Spleen (tissue), 13 donors: ENCODE measurements at regions of chr2 and their contacts with region 1.

Region 1: DNA sequence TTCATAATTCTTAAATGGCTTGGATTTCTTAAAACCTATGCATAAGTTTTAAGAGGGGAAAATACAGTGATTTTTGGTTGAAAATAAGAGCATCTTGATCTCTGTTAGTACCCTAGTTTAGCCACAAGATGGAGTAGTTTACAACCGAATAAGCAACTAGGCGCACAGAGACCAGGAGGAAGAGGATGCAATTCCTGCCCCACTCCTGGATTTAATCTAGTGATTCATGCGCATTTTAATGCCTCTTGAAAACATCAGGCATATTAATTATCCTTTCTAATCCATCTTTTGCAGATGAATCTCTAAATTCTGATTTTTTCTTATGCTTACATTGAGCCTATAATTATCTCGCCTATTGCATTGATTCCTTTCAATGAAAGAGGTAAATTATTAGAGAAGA is 76.7 kb downstream of the MRPS9 start:
- DNase-seq: no peak
- H3K4me3 ChIP-seq: no peak overlapping the region
- H3K27ac ChIP-seq: no peak overlapping the region
- H3K4me1 ChIP-seq: peaks cover 0 to 7% (median 0%) of the 10 kb centered on the region in 6 donors
- H3K27me3 ChIP-seq: peaks cover 0 to 4% (median 0%) of the 10 kb centered on the region in 7 donors
- CTCF ChIP-seq: peak; percentile 23 to 75 (median 67)
- POLR2A ChIP-seq: no peak

Region 2: DNA sequence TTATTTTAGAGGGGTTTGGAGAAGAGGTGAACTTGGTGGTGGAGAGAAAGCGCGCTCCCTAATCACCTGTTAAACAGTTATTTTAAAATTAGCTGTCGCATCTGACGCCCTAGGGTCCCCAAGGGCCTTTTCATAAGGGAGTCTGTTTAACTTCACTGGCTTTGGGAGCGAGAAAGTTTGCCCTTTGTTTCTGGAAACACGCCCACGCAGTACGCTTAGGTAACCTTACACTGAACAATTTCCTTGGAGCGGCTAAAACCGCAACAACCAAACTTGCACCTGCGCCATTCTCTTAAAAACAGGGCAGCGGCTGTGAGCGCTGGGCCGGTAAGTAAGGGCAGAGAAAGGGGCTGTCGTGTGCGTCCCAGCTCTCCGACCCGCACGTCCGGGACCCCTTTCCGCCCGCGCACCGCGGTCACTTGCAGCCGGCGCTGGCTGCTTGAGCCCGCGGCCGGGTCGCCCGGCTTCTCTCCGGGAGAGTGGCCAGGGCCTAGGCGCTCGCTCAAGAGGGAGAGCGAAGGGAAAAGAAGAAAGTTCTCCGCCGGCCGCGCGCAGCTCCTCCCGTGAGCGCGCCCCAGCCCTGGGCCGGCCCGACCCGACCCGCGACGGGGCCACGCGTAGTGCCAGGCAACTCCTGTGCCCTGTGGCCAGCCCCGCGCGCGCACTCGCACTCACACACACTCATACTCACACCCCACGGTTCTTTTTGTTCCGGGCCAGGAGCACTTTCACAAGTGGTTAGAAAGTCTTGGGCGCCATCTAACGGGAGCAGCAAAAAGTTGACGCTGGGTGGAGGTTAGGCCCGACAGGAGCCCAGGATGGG is 241.5 kb before region 1 on chr2:
- intact Hi-C with region 1: no loop called
- DNase-seq: peak; percentile 76
- H3K4me3 ChIP-seq: peak overlapping the region; percentile 40 to 80 (median 52)
- H3K27ac ChIP-seq: no peak overlapping the region
- H3K4me1 ChIP-seq: peaks cover 8 to 27% (median 21%) of the 10 kb centered on the region in 6 donors
- H3K27me3 ChIP-seq: peaks cover 0 to 92% (median 54%) of the 10 kb centered on the region in 7 donors
- CTCF ChIP-seq: peak in 7 of 11 experiments; percentile 27 to 55 (median 35)
- POLR2A ChIP-seq: no peak

Region 3: DNA sequence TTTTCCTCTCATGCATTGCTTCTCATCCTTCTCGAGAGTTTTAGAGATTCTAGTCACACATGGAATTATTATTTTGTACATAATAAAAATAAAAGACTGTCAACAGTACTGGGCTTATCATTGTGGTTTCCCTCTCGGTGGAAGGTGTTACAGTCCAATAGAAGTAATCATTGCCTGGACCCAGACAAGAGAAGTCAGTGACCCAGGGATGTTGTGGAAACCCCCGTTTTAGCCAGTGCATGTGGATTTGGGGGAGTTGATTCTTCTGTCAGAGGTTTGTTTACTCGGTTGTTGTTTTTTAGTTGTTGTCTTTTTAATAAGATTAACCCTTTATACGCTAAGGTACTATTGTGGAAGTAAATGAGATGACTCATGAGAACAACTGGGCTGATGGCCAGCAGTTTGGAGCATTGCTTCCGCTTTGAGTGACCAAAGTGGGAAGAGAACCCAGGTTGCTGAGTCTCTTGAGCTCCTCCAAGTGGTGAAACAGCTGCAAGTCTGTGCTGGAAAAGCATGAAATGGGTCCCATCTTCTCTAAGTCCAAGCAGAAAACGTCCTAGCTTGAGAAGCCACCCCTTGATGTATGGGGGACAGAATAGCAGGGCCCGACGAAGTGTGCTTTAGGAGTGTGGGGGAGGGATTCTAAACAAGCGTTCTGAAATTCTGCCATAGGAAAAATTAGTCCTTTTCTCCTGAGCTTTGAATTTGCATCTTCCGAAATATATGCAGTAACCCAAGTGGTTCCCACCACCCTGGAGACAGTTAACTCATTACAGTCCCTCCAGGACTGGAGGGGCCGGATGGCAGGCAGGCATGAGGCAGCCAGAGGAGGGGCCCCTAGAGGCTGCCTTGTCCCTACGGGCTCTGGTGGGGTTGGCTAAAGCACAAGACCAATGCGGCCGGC is 65.2 kb after region 1 on chr2:
- intact Hi-C with region 1: no loop called
- DNase-seq: no peak
- H3K4me3 ChIP-seq: no peak overlapping the region
- H3K27ac ChIP-seq: no peak overlapping the region
- H3K4me1 ChIP-seq: peaks cover 4 to 29% (median 15%) of the 10 kb centered on the region in 6 donors
- H3K27me3 ChIP-seq: peaks cover 0 to 13% (median 0%) of the 10 kb centered on the region in 7 donors
- CTCF ChIP-seq: peak in 4 of 11 experiments; percentile 11 to 29 (median 24)
- POLR2A ChIP-seq: no peak

Region 4: GRCh38 chr2:105235388-105236054 is 121.0 kb after region 1 on chr2:
- intact Hi-C with region 1: loop called (anchors 5 kb)
- DNase-seq: peak; percentile 83
- H3K4me3 ChIP-seq: no peak overlapping the region
- H3K27ac ChIP-seq: peak overlapping the region in 1 of 8 donors; percentile 18
- H3K4me1 ChIP-seq: peaks cover 0 to 40% (median 16%) of the 10 kb centered on the region in 6 donors
- H3K27me3 ChIP-seq: peaks cover 0 to 12% (median 0%) of the 10 kb centered on the region in 7 donors
- CTCF ChIP-seq: peak in 10 of 11 experiments; percentile 17 to 78 (median 70)
- POLR2A ChIP-seq: no peak

Region 5: DNA sequence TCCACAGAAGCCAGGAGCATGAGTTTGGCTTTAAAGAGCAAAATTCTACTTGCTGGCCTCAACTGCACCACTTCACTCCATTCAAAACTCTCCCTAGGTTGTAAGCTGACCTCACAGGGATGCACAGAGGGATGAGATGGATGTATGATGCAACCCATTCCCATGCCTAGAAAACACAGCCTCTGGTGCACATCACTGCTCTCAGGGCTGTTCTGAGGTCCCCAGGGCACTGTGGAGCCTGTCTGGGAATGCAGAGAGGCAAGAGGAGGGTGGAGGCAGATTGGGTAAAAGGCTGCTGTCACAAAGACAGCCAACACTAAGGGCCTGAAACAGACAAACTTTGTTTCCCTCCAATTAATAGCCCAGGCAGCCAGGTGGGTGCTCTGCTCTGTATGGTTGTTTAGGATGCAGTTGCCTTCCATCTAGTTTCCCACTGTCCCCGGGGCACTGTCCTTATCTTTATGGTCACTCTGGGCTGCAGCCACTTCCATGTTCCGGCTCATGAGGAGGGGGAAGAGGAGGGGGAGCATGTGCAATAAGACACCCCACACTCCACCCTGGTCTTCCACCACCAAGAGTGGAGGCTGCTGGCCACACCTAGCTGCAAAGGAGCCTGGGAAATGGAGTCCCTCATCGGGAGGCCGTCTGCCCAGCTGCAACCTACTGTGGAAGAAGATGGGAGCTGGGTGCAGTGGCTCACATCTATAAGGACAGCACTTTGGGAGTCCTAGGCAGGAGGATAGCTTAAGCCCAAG is 133.9 kb after region 1 on chr2:
- intact Hi-C with region 1: no loop called
- DNase-seq: no peak
- H3K4me3 ChIP-seq: no peak overlapping the region
- H3K27ac ChIP-seq: no peak overlapping the region
- H3K4me1 ChIP-seq: no peaks in the 10 kb centered on the region
- H3K27me3 ChIP-seq: no peaks in the 10 kb centered on the region
- CTCF ChIP-seq: no peak
- POLR2A ChIP-seq: no peak

Region 6: DNA sequence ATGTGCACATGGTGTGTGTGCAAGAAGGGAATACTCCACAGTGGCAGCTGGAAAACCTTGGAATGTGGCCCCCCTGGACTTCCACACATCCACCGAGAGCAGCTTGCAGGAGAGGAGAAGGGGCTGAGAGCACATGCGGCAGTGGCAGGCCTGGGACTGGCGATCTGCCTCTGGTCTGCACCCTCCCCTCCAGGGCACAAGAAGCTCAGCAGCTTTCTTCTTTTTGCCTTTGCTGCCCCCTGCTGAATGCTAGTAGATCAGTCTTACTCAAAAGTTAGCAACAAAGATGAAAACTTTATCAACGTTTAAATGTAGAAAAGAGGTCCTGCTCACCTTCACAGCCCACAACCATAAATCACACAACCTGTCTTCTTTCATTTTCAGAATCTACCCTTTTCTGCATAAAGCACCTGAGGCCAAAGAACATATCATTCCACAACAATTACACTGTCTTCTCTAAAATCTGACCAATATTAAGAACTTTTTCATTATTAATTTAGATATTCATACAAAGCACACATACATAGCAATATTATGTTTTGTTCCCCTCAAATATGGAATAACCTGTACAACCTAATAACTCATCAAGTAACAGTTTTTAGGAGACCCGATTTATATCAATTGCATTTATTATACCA is 180.4 kb after region 1 on chr2:
- intact Hi-C with region 1: loop called (anchors 10 kb)
- DNase-seq: no peak
- H3K4me3 ChIP-seq: no peak overlapping the region
- H3K27ac ChIP-seq: no peak overlapping the region
- H3K4me1 ChIP-seq: peaks cover 0 to 6% (median 0%) of the 10 kb centered on the region in 6 donors
- H3K27me3 ChIP-seq: no peaks in the 10 kb centered on the region
- CTCF ChIP-seq: peak in 5 of 11 experiments; percentile 22 to 49 (median 40)
- POLR2A ChIP-seq: no peak